ENCODE measurements at regions of chr12 and their contacts with region 1.

Region 1: DNA sequence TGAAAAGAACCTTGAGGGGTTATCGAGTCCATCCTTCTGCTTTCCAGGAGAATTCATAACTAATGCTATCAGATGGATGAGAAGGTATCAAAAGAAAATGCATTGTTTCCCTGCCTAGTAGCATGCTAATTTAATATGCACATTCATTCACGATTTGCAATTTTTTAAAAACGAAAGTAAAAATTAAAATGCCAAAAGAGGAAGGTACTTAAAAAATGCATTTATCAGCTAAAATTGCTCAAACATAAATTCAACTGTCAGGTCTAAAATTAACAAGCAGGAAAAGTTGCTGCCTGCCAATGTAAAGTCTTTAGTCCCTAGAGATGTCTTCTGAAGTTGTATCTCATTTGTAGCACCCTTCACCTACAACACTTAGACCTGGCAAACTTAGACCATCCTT is 7.9 kb downstream of the ATF7 start:
- DNase-seq: no peak

Region 2: GRCh38 chr12:53561590-53561953 is 56.7 kb before region 1 on chr12:
- intact Hi-C with region 1: loop called in 1 of 2 experiments (anchors 10 kb)
- DNase-seq: no peak

Region 3: GRCh38 chr12:53675651-53676453 is 57.6 kb after region 1 on chr12 and contains the start of gene ATP5MC2:
- intact Hi-C with region 1: loop called in 1 of 2 experiments (anchors 5 kb)
- DNase-seq: peak; percentile 99
- total RNA-seq, gene ATP5MC2: 132 to 168 TPM

Region 4: GRCh38 chr12:53887006-53887405 is 268.7 kb after region 1 on chr12:
- intact Hi-C with region 1: no loop called
- DNase-seq: no peak

Region 5: DNA sequence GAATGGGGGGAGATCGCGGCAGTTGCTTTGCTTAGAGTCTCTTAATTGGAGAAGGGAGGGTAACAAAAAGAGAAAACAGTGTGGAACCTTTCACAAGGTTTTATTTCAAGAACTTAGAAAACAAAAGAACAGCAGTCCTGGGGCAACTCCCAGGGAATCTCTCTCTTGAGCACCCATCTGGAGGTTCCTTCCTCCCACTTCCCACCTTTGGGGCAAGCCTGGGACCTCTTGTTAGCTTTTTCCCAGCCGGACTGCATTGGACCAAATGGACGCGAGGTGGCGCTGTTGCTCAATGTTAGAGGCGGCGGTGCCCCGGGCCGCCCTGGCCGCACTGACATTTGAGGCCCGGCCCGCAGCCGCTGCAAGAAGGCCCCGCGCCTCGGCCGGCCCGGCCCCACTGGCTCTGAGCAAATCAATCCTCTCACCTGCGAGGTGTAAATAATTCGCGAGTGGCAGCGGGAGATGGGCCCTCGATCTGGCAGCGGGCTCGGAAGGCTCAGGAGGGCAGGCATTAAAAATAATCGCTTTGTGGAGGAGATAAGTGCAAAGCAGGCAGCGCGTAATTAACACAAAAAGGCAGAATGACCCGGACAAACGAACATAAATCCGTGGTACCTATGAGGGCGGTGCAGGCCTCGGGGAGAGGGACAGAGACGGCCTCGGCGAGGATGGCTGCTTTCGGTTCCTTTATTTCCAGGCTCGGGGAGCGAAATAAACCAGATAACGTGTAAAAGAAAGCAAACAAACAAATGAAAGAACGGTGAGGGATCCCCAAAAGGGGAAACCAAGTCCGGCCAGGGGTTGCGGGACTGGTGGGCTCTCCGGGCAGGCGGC is 387.8 kb after region 1 on chr12:
- intact Hi-C with region 1: no loop called
- DNase-seq: peak; percentile 97